ENCODE measurements at regions of chr6 and their contacts with region 1.

Region 1: GRCh38 chr6:127291495-127291894 is 24.8 kb downstream of the RNF146 start:
- DNase-seq: no peak
- ATAC-seq: peak; percentile 76
- H3K4me3 Mint-ChIP-seq: peak overlapping the region; percentile 46
- H3K27ac Mint-ChIP-seq: no peak overlapping the region
- H3K4me1 Mint-ChIP-seq: peaks cover 22% of the 10 kb centered on the region
- H3K27me3 Mint-ChIP-seq: no peaks in the 10 kb centered on the region

Region 2: GRCh38 chr6:127266178-127266891 is 25.2 kb before region 1 on chr6 and contains the start of gene RNF146:
- CTCF ChIA-PET with region 1: interaction called, 25 read pairs
- DNase-seq: peak; percentile 80
- ATAC-seq: peak; percentile 84
- H3K4me3 Mint-ChIP-seq: peak within 1 kb of the TSS; percentile 100
- H3K27ac Mint-ChIP-seq: peak within 1 kb of the TSS; percentile 100
- H3K4me1 Mint-ChIP-seq: peaks cover 34% of the 10 kb centered on the region
- H3K27me3 Mint-ChIP-seq: peaks cover 4% of the 10 kb centered on the region
- total RNA-seq, gene RNF146: 18.2 to 24.9 TPM

Region 3: DNA sequence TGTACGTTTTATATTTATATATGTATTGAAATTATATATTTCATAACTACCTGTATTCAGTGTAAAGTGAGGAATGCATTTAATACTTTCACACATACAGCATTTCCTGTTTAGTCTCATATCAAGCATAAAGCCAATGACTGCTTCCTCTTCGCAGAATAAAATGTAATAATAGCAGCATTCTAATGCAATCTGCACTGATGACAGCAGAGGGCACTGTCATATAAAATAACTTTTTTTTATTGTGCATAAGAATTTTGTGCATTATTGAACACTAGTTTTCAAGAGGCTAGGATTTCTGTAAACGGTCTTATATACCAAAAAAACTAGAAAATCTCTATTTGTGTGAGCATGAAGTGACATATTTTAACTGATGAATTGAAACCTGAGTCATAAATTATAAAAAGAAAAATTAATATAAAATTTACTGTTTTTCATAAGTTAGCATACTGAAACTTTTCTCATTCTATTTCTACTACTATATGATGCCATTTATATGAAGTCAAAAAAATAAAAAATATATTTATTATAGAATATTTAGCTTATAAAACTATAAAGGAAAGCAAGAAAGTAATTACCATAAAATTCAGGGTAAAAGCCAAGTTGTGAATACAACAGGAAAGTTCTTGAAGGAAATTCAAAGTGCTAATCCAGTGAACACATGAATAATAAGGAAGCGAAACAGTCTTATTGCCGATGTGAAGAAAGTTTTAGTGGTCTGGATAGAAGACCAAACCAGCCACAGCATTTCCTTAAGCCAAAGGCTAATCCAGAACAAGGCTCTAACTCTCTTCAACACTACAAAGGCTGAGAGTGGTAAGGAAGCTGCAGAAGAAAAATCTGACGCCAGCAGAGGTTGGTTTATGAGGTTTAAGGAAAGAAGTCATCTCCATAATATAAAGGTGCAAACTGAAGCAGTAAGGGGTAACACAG is 11.5 kb after region 1 on chr6:
- CTCF ChIA-PET with region 1: interaction called, 11 read pairs
- DNase-seq: peak; percentile 58
- ATAC-seq: peak; percentile 60
- H3K4me3 Mint-ChIP-seq: no peak overlapping the region
- H3K27ac Mint-ChIP-seq: no peak overlapping the region
- H3K4me1 Mint-ChIP-seq: peaks cover 11% of the 10 kb centered on the region
- H3K27me3 Mint-ChIP-seq: no peaks in the 10 kb centered on the region

Measured in activated CD8-positive, alpha-beta memory T cell treated with anti-CD3 and anti-CD28 coated beads, Interleukin-2, amount 10 ng/mL, durations not matched to agents 7 days and 5 days (primary cell).